Pancreas (tissue), 10 donors: ENCODE measurements at regions of chr5 and their contacts with region 1.

Region 1: GRCh38 chr5:112419986-112420864 is 1.1 kb upstream of the EPB41L4A start:
- DNase-seq: peak; percentile 77 to 93 (median 85)
- ATAC-seq: peak; percentile 90 to 95 (median 92)
- H3K4me3 ChIP-seq: peak overlapping the region; percentile 23 to 89 (median 78)
- H3K27ac ChIP-seq: peak overlapping the region; percentile 42 to 84 (median 74)
- H3K4me1 ChIP-seq: peaks cover 0 to 6% (median 5%) of the 10 kb centered on the region in 3 donors
- H3K27me3 ChIP-seq: peaks cover 0 to 4% (median 0%) of the 10 kb centered on the region in 4 donors
- CTCF ChIP-seq: peak; percentile 63 to 87 (median 84)

Region 2: GRCh38 chr5:112210430-112211005 is 209.7 kb before region 1 on chr5:
- intact Hi-C with region 1: loop called in 2 of 3 experiments (anchors 5 to 10 kb)
- DNase-seq: peak in 3 of 6 donors; percentile 15 to 51 (median 35)
- ATAC-seq: peak; percentile 63 to 90 (median 81)
- H3K4me3 ChIP-seq: no peak overlapping the region
- H3K27ac ChIP-seq: no peak overlapping the region
- H3K4me1 ChIP-seq: no peaks in the 10 kb centered on the region
- H3K27me3 ChIP-seq: no peaks in the 10 kb centered on the region
- CTCF ChIP-seq: peak in 3 of 4 donors; percentile 36 to 47 (median 39)